Astrocyte of the cerebellum (primary cell): ENCODE measurements at regions of chr22 and their contacts with region 1.

Region 1: GRCh38 chr22:38957046-38957759 is at the start of gene APOBEC3A:
- DNase-seq: no peak
- H3K4me3 ChIP-seq: no peak within 1 kb of the TSS
- CTCF ChIP-seq: no peak

Region 2: DNA sequence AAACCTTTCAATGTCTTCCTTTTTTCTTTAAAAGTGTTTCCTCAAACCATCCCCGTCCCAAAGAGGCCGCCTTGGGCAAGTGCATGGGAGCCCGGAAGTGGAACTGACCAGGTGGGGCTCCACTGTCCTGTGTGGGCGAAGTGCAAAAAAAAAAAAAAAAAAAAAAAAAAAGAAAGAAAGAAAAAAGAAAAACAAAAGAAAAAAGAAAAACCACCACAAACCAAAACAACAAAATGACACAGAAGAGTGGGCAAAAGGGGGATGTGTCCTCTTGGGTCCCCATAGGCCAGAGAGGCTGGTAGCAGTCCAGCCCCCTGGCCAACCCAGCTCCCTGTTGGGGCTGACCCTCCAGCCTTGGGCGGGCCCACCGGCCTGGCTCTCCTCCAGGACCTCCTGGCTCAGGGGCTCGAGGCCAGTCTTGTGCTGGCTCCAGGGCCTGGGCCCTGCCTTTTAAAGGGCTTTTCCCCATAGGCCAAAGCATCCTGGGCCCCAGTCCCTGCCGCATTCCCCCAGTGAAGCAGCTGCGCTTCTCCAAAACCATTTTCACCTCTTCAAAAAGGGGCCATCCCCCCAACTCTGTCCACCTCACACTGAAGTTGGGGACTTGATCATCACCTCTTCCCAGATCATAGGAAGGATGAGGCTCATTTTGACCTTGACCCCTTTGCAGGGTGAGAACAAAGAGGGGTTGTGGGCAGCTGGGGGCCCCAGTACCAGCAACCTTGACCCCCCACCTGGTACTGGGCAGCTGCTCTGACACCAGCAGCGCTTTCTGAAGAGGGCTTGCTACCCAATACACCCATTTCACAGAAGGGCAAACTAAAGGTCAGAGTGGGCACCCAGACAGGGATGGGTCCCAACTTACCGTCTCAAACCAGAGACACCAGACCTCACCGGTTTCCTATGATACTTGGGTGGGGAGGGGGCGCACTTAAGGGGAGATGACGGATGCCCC is 94.6 kb before region 1 on chr22:
- in situ Hi-C with region 1: no loop called
- DNase-seq: no peak
- H3K4me3 ChIP-seq: no peak overlapping the region
- CTCF ChIP-seq: no peak

Region 3: GRCh38 chr22:38872831-38873248 is 84.4 kb before region 1 on chr22:
- in situ Hi-C with region 1: no loop called
- DNase-seq: no peak
- H3K4me3 ChIP-seq: peak overlapping the region; percentile 73
- CTCF ChIP-seq: no peak

Region 4: GRCh38 chr22:38923463-38924346 is 33.5 kb before region 1 on chr22:
- in situ Hi-C with region 1: loop called (anchors 5 kb)
- DNase-seq: peak; percentile 89
- H3K4me3 ChIP-seq: peak overlapping the region; percentile 20
- CTCF ChIP-seq: peak; percentile 55

Region 5: GRCh38 chr22:39215426-39216120 is 258.4 kb after region 1 on chr22:
- in situ Hi-C with region 1: no loop called
- DNase-seq: no peak
- H3K4me3 ChIP-seq: no peak overlapping the region
- CTCF ChIP-seq: peak; percentile 23